Thyroid gland (tissue), 4 donors: ENCODE measurements at regions of chr2 and their contacts with region 1.

Region 1: GRCh38 chr2:43484323-43484930 is 111.4 kb downstream of the THADA start:
- DNase-seq: no peak
- H3K4me3 ChIP-seq: no peak overlapping the region
- H3K27ac ChIP-seq: peak overlapping the region; percentile 8 to 75 (median 50)
- H3K4me1 ChIP-seq: peaks cover 23 to 57% of the 10 kb centered on the region in 2 donors
- H3K27me3 ChIP-seq: no peaks in the 10 kb centered on the region
- CTCF ChIP-seq: peak in 5 of 6 experiments; percentile 29 to 91 (median 59)
- POLR2A ChIP-seq: no peak

Region 2: DNA sequence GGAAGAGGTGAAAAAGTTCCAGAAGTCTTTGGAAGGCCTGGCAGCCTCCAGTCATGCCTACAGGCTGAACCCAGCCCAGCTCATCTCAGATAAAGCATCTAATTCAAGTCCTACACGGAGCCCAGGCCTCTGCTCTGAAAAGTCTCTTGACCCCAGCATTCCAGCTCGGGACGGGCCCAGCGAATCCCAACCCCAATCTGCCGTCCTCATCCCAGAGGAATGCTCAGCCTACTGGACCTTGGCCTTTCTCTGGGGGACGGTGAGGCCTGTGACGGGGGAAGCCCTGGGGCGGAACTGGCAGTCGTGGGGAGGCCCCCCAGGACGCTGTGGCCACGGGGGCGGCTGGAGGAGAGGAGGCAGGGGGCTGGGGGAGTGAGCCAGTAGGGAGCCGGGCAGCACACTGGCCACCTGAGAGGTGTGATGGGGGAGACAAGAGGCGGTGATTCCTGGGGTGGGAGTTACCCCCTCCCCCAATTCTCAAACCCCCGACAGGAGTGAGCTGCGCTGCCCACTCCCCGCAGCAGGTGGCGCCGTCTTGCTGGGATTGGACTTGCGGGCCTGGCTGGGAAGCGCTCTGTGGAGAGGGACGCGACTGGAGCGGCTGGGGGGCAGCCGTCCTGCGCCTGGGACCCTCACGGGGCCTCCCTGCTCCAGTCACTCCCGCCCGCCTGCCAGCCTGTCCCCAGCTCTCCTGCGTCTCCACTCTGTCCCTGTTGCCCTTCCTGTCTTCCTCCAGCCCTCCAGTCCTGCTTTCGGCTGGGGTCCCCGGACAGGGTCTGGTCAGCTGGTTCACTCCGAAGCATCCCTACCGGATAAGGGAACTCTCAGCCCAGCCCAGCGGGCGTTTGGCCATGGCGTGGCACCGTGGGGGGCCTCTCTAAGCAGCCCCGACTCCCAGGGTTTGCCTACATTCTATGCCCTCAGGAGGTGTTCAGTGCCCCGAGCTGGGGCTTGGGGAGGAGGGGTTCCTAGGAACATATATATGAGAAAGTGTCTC is 509.4 kb before region 1 on chr2:
- intact Hi-C with region 1: loop called (anchors 10 kb)
- DNase-seq: peak; percentile 78 to 79
- H3K4me3 ChIP-seq: peak overlapping the region in 1 of 3 donors; percentile 12
- H3K27ac ChIP-seq: peak overlapping the region in 2 of 3 donors; percentile 39 to 66
- H3K4me1 ChIP-seq: peaks cover 13 to 14% of the 10 kb centered on the region in 2 donors
- H3K27me3 ChIP-seq: no peaks in the 10 kb centered on the region
- CTCF ChIP-seq: peak; percentile 78 to 96 (median 91)
- POLR2A ChIP-seq: no peak

Region 3: DNA sequence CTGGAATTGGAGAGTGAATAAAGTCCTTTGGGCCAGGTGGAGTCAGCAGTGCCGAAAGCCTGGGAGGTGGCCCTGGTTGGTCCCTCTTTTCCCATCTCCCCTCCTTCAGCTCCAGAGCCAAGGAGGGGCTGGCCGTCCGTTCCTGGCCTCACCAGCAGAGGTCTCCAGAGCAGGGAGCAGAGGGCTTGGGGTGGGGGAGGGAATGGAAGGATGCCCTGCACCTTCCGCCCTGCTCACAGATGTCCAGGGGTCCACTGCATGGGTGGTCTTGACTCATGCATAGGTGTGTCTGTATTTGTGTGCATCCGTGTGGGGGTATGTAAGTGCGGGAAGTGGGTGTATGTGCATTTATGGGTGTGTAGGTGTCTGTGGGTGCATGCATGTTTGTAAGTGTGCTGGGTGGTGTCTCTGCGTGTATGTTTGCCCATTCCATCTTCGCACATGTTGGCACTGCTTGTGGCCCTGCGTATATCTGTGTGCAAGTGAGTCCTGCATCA is 459.9 kb before region 1 on chr2:
- intact Hi-C with region 1: loop called (anchors 10 kb)
- DNase-seq: peak; percentile 63 to 68
- H3K4me3 ChIP-seq: no peak overlapping the region
- H3K27ac ChIP-seq: no peak overlapping the region
- H3K4me1 ChIP-seq: peaks cover 0 to 10% of the 10 kb centered on the region in 2 donors
- H3K27me3 ChIP-seq: no peaks in the 10 kb centered on the region
- CTCF ChIP-seq: peak; percentile 63 to 91 (median 76)
- POLR2A ChIP-seq: no peak

Region 4: DNA sequence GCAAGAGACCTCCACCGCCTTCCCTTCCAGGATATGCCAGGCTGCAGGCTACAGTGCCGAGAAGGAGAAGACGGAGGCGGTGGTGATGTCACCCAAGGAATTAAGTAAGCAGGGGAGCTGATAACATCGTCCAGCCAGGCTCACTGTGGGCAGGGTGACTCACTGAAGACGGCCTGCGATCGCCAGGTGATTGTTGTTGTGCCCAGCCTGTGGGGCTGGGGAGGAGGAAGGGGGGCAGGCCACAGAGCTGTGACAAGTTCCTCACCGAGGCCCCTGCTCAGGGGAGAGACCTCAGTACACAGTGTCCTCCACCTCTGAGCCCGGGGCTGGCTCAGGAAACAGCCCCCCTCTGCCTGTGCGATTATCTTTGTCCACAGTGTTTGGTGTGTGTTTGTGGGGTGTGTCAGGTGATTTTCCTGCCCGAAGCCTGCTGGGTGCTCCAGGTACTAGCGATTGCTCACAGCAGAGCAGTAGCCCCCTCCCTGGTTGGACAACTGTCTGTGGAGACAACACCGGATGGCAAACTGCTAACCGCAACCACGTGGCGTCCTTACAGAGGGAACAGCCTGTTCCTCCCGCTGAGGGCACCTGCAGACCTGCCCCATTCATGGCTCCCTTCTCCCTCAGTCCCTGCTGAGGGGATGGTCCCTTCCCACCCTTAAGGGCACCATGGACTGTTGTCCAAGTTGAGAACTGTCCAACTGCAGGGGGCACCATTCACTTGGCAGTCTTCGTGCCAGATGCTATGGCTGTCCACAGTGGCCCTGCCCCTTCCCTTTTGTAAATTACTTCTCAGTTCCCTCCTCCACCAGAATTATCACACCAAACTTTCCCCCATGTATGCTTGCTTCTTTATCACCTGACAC is 353.2 kb before region 1 on chr2:
- intact Hi-C with region 1: loop called (anchors 10 kb)
- DNase-seq: peak; percentile 60 to 67
- H3K4me3 ChIP-seq: no peak overlapping the region
- H3K27ac ChIP-seq: peak overlapping the region; percentile 30 to 56 (median 50)
- H3K4me1 ChIP-seq: peaks cover 0 to 55% of the 10 kb centered on the region in 2 donors
- H3K27me3 ChIP-seq: no peaks in the 10 kb centered on the region
- CTCF ChIP-seq: peak in 4 of 6 experiments; percentile 36 to 61 (median 46)
- POLR2A ChIP-seq: no peak